ENCODE measurements at regions of chr14 and their contacts with region 1.

Region 1: GRCh38 chr14:73568381-73568781 is 632 bp upstream of the ACOT2 start:
- DNase-seq: peak; percentile 34
- H3K4me3 Mint-ChIP-seq: peak overlapping the region; percentile 93
- H3K27ac Mint-ChIP-seq: peak overlapping the region; percentile 88
- H3K4me1 Mint-ChIP-seq: peaks cover 9% of the 10 kb centered on the region
- H3K27me3 Mint-ChIP-seq: no peaks in the 10 kb centered on the region
- CTCF ChIP-seq: no peak

Region 2: GRCh38 chr14:73426877-73427276 is 141.5 kb before region 1 on chr14:
- CTCF ChIA-PET with region 1: no interaction called
- POLR2A ChIA-PET with region 1: no interaction called
- intact Hi-C with region 1: no loop called
- DNase-seq: no peak
- H3K4me3 Mint-ChIP-seq: no peak overlapping the region
- H3K27ac Mint-ChIP-seq: no peak overlapping the region
- H3K4me1 Mint-ChIP-seq: peaks cover 11% of the 10 kb centered on the region
- H3K27me3 Mint-ChIP-seq: no peaks in the 10 kb centered on the region
- CTCF ChIP-seq: no peak

Region 3: GRCh38 chr14:73491256-73492042 is 76.9 kb before region 1 on chr14:
- CTCF ChIA-PET with region 1: interaction called, 3 read pairs
- POLR2A ChIA-PET with region 1: interaction called, 18 read pairs
- intact Hi-C with region 1: no loop called
- DNase-seq: peak; percentile 59
- H3K4me3 Mint-ChIP-seq: peak overlapping the region; percentile 86
- H3K27ac Mint-ChIP-seq: peak overlapping the region; percentile 83
- H3K4me1 Mint-ChIP-seq: peaks cover 12% of the 10 kb centered on the region
- H3K27me3 Mint-ChIP-seq: no peaks in the 10 kb centered on the region
- CTCF ChIP-seq: no peak

Region 4: GRCh38 chr14:73526569-73526968 is 41.8 kb before region 1 on chr14:
- CTCF ChIA-PET with region 1: interaction called, 4 read pairs
- POLR2A ChIA-PET with region 1: interaction called, 33 read pairs
- intact Hi-C with region 1: loop called (anchors 5 kb)
- DNase-seq: peak; percentile 75
- H3K4me3 Mint-ChIP-seq: no peak overlapping the region
- H3K27ac Mint-ChIP-seq: peak overlapping the region; percentile 67
- H3K4me1 Mint-ChIP-seq: peaks cover 17% of the 10 kb centered on the region
- H3K27me3 Mint-ChIP-seq: no peaks in the 10 kb centered on the region
- CTCF ChIP-seq: no peak

Region 5: DNA sequence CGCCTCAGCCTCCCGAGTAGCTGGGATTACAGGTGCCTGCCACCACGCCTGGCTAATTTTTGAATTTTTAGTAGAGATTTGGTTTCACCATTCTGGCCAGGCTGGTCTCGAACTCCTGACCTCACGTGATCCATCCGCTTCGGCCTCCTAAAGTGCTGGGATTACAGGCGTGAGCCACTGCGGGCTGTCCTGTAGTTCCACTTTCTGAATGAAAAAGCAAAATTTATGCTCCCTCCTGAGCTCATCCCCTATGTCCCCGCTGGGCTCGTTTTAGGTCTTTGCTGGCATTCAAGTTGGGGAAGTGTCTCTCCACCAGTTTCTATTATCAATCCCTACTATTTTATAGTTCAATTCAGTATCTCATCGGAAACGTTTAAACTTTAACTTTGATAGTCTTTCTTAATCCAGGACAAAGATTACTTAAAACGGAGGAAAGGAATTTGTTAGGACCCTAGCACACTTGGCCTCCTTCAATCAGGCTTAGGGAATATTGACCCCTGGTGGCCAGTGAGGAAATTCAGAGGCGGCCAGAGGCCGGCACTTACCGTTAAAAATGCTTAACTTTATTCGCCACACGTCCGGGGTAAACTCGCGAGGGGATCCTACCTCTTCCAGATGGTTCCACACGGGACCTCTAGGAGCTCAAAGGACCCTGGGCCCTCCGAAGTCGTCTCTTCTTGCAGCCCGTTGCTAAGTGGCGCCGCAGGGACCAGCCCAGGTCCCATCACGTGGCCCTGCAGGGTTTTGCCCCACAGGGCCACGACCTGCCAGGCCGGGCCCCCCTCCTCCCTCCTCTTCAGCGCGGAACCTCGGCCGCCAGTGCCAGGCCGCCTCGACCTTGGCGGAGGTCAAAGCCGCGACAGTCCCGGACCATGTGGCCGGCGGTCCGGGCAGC is 65.0 kb after region 1 on chr14:
- CTCF ChIA-PET with region 1: interaction called, 3 read pairs
- POLR2A ChIA-PET with region 1: interaction called, 5 read pairs
- intact Hi-C with region 1: loop called (anchors 1 kb)
- DNase-seq: peak; percentile 80
- H3K4me3 Mint-ChIP-seq: peak overlapping the region; percentile 60
- H3K27ac Mint-ChIP-seq: no peak overlapping the region
- H3K4me1 Mint-ChIP-seq: peaks cover 4% of the 10 kb centered on the region
- H3K27me3 Mint-ChIP-seq: no peaks in the 10 kb centered on the region
- CTCF ChIP-seq: peak; percentile 87